Activated B cell treated with CpG ODN at 0.5 μM for 24 hours (primary cell): ENCODE measurements at regions of chr7 and their contacts with region 1.

Region 1: DNA sequence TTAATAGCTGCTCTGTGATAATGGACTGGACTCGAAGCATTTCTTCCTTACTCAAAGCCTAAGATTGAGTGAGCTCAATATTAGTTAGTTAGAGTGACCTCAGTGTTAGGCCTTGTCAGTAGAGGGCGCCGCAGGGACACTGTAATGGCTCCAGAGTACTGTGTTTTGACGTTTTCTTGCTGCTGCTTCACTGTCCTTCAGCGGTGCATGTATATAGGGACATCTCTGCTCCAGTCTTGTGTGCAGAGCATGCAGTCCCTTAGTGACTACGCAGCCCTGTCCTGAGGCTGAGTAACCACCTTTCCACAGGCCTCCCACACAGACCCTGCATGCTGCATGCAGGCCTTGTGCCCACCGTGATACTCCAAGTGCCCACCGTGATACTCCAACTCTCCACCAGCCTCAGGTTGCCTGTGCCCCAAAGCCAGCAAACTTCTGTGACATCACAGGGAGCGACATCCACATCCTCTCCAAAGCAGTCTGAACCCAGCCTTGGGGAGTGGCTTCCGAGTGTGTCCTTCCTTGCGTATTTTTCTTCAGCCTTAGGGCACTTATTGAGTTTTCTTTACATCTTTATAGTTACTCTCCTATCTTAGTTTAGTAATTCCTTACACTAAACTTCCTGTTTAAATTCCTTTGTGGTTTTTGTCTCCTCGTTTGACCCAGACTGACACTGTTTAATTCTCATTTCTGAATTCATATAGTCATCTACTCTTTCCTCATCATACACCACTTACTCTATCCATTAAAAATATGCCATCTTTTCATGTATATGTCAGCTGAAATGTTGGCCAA is 118.2 kb downstream of the JAZF1 start:
- DNase-seq: peak; percentile 33
- ATAC-seq: peak; percentile 64
- H3K4me3 Mint-ChIP-seq: no peak overlapping the region
- H3K27ac Mint-ChIP-seq: no peak overlapping the region
- H3K4me1 Mint-ChIP-seq: peaks cover 34% of the 10 kb centered on the region
- H3K27me3 Mint-ChIP-seq: no peaks in the 10 kb centered on the region
- CTCF ChIP-seq: peak; percentile 40

Region 2: DNA sequence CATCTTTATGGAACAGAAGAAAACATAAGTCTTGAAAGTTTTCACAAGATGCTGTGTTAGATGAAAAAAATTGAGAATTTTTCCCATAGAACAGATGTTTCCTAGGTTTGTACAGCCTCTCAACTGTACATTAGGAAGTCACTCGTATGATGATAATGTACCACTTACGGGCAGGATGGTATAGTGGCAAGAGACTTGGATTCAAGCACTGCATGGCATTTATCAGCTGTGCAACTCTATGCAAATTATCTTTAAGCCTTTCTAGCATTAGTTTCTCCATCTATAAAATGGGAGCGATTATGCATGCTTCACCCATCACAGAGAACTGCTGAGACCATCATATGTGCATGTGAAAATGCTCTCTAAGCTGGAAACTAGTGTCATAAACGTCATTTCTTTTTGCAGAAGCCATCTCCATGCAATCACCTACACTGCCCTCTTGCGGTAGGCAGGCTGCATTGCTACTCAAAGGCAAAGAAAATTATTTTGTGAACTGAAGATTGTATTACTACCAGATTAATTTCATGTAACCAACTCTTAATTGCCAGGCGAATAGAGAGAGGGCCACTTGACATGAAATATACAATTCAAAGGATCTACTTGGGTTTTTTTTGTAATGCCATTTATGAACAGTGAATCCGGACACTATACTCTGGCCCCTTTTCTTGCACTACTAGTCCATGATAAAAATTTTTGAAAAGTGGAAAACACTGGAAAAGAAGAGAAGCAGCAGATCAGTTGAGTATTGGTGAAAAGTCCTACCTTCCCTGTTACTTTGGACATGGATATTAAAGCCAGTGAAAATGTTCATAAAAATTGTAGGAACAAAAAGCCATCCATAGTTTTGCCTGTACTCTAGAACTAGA is 15.9 kb after region 1 on chr7:
- CTCF ChIA-PET with region 1: interaction called, 7 read pairs
- POLR2A ChIA-PET with region 1: no interaction called
- intact Hi-C with region 1: loop called (anchors 2 kb)
- DNase-seq: no peak
- ATAC-seq: peak; percentile 71
- H3K4me3 Mint-ChIP-seq: no peak overlapping the region
- H3K27ac Mint-ChIP-seq: no peak overlapping the region
- H3K4me1 Mint-ChIP-seq: peaks cover 43% of the 10 kb centered on the region
- H3K27me3 Mint-ChIP-seq: no peaks in the 10 kb centered on the region
- CTCF ChIP-seq: peak; percentile 62

Region 3: DNA sequence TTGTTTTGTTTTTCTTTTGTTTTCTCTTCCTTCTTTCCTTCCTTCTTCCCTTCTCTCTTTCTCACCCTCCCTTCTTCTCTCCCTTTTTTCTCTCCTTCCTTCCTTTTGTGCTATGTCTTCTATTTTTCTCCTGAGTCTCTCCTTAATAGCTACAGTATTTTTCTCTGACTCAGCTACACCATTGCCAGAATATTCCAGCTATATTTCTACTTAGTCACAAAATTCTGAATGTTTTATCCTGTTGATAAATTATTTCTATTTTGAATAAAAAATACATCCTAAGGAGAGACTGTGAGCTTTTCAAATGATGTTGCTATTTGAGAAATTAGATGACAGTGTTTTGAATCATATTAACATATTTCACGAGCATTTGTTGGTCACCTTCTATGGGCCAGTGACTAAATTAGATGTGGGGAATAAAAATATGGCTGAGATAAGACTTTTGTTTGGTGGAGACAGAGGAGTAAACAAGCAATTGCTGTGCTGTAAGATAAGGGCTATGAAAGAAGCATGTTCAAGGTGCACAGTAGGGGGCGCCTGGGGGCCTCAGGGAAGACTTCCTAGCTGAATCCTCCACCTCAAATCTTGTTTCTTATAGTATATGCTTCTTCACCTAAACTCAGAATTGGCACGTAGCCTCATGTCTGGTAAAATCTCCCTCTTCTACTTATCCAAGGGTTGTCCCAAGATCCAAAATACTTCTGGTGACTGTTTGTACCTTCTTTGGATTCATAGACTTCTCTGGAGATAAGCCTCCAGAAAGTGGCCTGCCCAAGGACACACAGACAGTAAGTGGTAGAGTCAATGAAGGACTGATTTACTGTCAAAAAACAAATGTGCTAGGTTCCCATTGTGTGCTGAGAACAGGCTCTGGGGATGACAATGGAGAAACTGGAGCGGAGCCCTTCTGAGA is 234.4 kb after region 1 on chr7:
- CTCF ChIA-PET with region 1: no interaction called
- POLR2A ChIA-PET with region 1: no interaction called
- intact Hi-C with region 1: no loop called
- DNase-seq: no peak
- ATAC-seq: no peak
- H3K4me3 Mint-ChIP-seq: no peak overlapping the region
- H3K27ac Mint-ChIP-seq: no peak overlapping the region
- H3K4me1 Mint-ChIP-seq: peaks cover 28% of the 10 kb centered on the region
- H3K27me3 Mint-ChIP-seq: no peaks in the 10 kb centered on the region
- CTCF ChIP-seq: no peak